ENCODE measurements at regions of chr1 and their contacts with region 1.

Region 1: GRCh38 chr1:185317034-185317885 is at the start of gene IVNS1ABP:
- DNase-seq: peak; percentile 99
- H3K4me3 ChIP-seq: peak within 1 kb of the TSS; percentile 83 to 96 (median 92)
- H3K27ac ChIP-seq: peak within 1 kb of the TSS; percentile 93 to 98 (median 96)
- H3K4me1 ChIP-seq: peaks cover 13 to 43% (median 39%) of the 10 kb centered on the region in 4 donors
- H3K27me3 ChIP-seq: no peaks in the 10 kb centered on the region
- CTCF ChIP-seq: peak in 2 of 3 experiments; percentile 6 to 15
- EP300 ChIP-seq: no peak
- POLR2A ChIP-seq: peak; percentile 92
- total RNA-seq, gene IVNS1ABP: 19.8 to 51.2 (median 30.5) TPM

Region 2: GRCh38 chr1:185156854-185157598 is 160.2 kb before region 1 on chr1 and contains the starts of genes SWT1 and TRMT1L:
- intact Hi-C with region 1: loop called (anchors 10 kb)
- DNase-seq: peak; percentile 100
- H3K4me3 ChIP-seq: peak within 1 kb of the TSS; percentile 84 to 96 (median 88)
- H3K27ac ChIP-seq: peak within 1 kb of the TSS; percentile 97 to 99 (median 98)
- H3K4me1 ChIP-seq: peaks cover 26 to 50% (median 39%) of the 10 kb centered on the region in 4 donors
- H3K27me3 ChIP-seq: no peaks in the 10 kb centered on the region
- CTCF ChIP-seq: no peak
- EP300 ChIP-seq: no peak
- POLR2A ChIP-seq: peak; percentile 97
- total RNA-seq, gene SWT1: 5.8 to 9.6 (median 6.3) TPM
- total RNA-seq, gene TRMT1L: 11.9 to 16.6 (median 15.3) TPM

Region 3: GRCh38 chr1:185670187-185670627 is 352.9 kb after region 1 on chr1:
- intact Hi-C with region 1: loop called (anchors 10 kb)
- DNase-seq: no peak
- H3K4me3 ChIP-seq: no peak overlapping the region
- H3K27ac ChIP-seq: no peak overlapping the region
- H3K4me1 ChIP-seq: peaks cover 0 to 16% (median 2%) of the 10 kb centered on the region in 4 donors
- H3K27me3 ChIP-seq: peaks cover 0 to 5% (median 0%) of the 10 kb centered on the region in 4 donors
- CTCF ChIP-seq: peak; percentile 43 to 49 (median 43)
- EP300 ChIP-seq: no peak
- POLR2A ChIP-seq: no peak